Mammary epithelial cell (primary cell): ENCODE measurements at regions of chr5 and their contacts with region 1.

Region 1: GRCh38 chr5:176803940-176804498 is 6.3 kb upstream of the UNC5A start:
- DNase-seq: peak; percentile 43
- H3K4me3 ChIP-seq: no peak overlapping the region
- H3K27ac ChIP-seq: no peak overlapping the region
- H3K4me1 ChIP-seq: no peaks in the 10 kb centered on the region
- H3K27me3 ChIP-seq: peaks cover 10% of the 10 kb centered on the region
- CTCF ChIP-seq: no peak

Region 2: GRCh38 chr5:176739461-176740051 is 64.5 kb before region 1 on chr5:
- CTCF ChIA-PET with region 1: no interaction called
- dilution Hi-C with region 1: loop called (anchors 5 kb)
- in situ Hi-C with region 1: no loop called
- intact Hi-C with region 1: no loop called
- DNase-seq: no peak
- H3K4me3 ChIP-seq: no peak overlapping the region
- H3K27ac ChIP-seq: no peak overlapping the region
- H3K4me1 ChIP-seq: peaks cover 3% of the 10 kb centered on the region
- H3K27me3 ChIP-seq: peaks cover 21% of the 10 kb centered on the region
- CTCF ChIP-seq: no peak

Region 3: GRCh38 chr5:176837707-176838115 is 33.7 kb after region 1 on chr5:
- CTCF ChIA-PET with region 1: no interaction called
- dilution Hi-C with region 1: no loop called
- in situ Hi-C with region 1: no loop called
- intact Hi-C with region 1: no loop called
- DNase-seq: peak; percentile 74
- H3K4me3 ChIP-seq: no peak overlapping the region
- H3K27ac ChIP-seq: no peak overlapping the region
- H3K4me1 ChIP-seq: no peaks in the 10 kb centered on the region
- H3K27me3 ChIP-seq: peaks cover 7% of the 10 kb centered on the region
- CTCF ChIP-seq: no peak

Region 4: GRCh38 chr5:176857216-176857893 is 53.3 kb after region 1 on chr5:
- CTCF ChIA-PET with region 1: no interaction called
- dilution Hi-C with region 1: loop called (anchors 5 kb)
- in situ Hi-C with region 1: no loop called
- intact Hi-C with region 1: no loop called
- DNase-seq: no peak
- H3K4me3 ChIP-seq: no peak overlapping the region
- H3K27ac ChIP-seq: no peak overlapping the region
- H3K4me1 ChIP-seq: no peaks in the 10 kb centered on the region
- H3K27me3 ChIP-seq: peaks cover 6% of the 10 kb centered on the region
- CTCF ChIP-seq: no peak

Region 5: DNA sequence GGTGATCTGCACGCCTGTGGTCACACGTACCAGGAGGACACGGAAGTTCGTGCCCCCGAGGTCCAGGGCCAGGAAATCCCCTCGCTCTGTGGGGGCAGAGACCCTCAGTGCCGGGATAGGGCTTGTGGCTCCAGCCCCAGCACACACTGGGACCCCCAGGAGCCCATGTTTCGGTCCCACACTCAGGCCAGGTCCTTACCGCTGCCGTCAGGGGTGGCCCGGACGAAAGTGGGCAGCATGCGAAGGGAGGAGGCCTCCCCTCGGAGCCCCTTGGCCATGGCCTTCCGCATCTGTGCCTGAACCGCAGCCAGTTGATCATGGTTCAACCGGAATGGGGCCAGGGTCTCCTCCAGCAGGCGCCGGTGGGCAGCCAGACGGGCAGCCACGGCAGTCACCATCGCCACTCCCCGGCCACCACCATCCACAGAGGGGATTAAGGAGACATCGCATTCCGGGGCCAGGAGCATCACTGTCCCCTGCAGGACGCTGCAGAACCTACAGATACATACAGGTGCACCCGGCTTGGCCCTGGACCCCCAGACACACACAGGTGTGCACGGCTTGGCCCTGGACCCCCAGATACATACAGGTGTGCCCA is 83.3 kb after region 1 on chr5:
- CTCF ChIA-PET with region 1: no interaction called
- dilution Hi-C with region 1: loop called (anchors 5 kb)
- in situ Hi-C with region 1: no loop called
- intact Hi-C with region 1: no loop called
- DNase-seq: no peak
- H3K4me3 ChIP-seq: no peak overlapping the region
- H3K27ac ChIP-seq: no peak overlapping the region
- H3K4me1 ChIP-seq: no peaks in the 10 kb centered on the region
- H3K27me3 ChIP-seq: no peaks in the 10 kb centered on the region
- CTCF ChIP-seq: no peak